OCI-LY7 (cell line): ENCODE measurements at regions of chr14 and their contacts with region 1.

Region 1: GRCh38 chr14:93115069-93115820 is 480 bp downstream of the ITPK1 start:
- DNase-seq: peak; percentile 88
- H3K4me3 ChIP-seq: peak overlapping the region; percentile 81
- H3K27ac ChIP-seq: peak overlapping the region; percentile 46
- H3K4me1 ChIP-seq: peaks cover 27% of the 10 kb centered on the region
- CTCF ChIP-seq: no peak

Region 2: GRCh38 chr14:93089521-93090269 is 25.6 kb before region 1 on chr14:
- CTCF ChIA-PET with region 1: interaction called, 10 read pairs
- POLR2A ChIA-PET with region 1: no interaction called
- intact Hi-C with region 1: no loop called
- DNase-seq: no peak
- H3K4me3 ChIP-seq: no peak overlapping the region
- H3K27ac ChIP-seq: no peak overlapping the region
- H3K4me1 ChIP-seq: no peaks in the 10 kb centered on the region
- CTCF ChIP-seq: no peak

Region 3: GRCh38 chr14:93184388-93185353 is 69.4 kb after region 1 on chr14 and contains the starts of genes LYSET and MOAP1:
- CTCF ChIA-PET with region 1: no interaction called
- POLR2A ChIA-PET with region 1: interaction called, 5 read pairs
- intact Hi-C with region 1: loop called (anchors 2 kb)
- DNase-seq: peak; percentile 93
- H3K4me3 ChIP-seq: peak within 1 kb of the TSS; percentile 100
- H3K27ac ChIP-seq: peak within 1 kb of the TSS; percentile 87
- H3K4me1 ChIP-seq: peaks cover 21% of the 10 kb centered on the region
- CTCF ChIP-seq: peak; percentile 64
- total RNA-seq, gene LYSET: 9.3 and 12.0 TPM in 2 replicates
- total RNA-seq, gene MOAP1: 31.2 and 34.3 TPM in 2 replicates

Region 4: GRCh38 chr14:93219103-93219726 is 104.0 kb after region 1 on chr14:
- CTCF ChIA-PET with region 1: interaction called, 6 read pairs
- POLR2A ChIA-PET with region 1: no interaction called
- intact Hi-C with region 1: loop called (anchors 2 kb)
- DNase-seq: peak; percentile 77
- H3K4me3 ChIP-seq: no peak overlapping the region
- H3K27ac ChIP-seq: no peak overlapping the region
- H3K4me1 ChIP-seq: no peaks in the 10 kb centered on the region
- CTCF ChIP-seq: peak; percentile 94